Right ventricle myocardium inferior (tissue), 1 donor: ENCODE measurements at regions of chr5 and their contacts with region 1.

Region 1: GRCh38 chr5:151051066-151051930 is 29.5 kb downstream of the TNIP1 start:
- DNase-seq: peak; percentile 85
- ATAC-seq: peak; percentile 83

Region 2: DNA sequence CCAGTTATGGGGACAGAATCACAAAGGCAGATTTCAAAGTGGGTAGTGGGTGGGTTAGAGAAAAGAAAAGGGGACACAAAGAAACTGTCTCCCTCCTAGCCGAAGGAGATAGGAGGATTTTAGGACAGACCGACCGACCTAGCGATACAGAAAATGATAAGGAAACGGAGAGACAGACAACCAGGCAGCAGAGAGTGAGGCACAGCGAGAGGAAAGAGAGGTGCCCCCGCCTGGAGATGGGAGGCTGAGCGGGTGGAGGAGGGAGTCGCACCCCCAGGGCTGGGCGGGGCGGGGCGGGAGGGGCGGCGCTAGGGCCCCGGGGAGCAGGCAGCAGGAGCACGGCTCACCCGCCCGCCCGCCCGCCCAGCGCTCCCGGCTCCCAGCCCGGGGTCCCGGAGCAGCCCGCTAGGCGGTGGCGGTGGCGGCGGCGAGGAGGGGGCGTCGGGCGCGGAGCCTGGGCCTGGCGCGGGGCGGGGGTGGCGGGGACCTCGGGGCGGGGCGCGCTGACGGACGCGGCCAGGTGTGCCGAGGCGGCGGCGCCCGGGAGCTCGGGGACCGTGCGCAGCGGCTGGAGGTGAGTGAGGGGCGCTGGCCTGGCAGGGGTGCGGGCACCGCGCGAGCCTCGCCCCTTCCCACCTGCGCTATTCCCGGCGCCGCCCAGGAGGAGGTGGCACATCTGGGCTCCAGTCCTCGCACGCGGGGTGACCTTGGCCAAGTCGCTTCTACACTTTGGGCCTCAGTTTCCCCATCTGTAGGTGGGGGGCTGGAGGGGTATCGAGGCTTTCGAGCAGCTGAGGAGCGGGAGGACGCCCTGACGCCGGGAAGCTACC is 426.7 kb before region 1 on chr5:
- intact Hi-C with region 1: no loop called
- DNase-seq: peak; percentile 65
- ATAC-seq: peak; percentile 34

Region 3: DNA sequence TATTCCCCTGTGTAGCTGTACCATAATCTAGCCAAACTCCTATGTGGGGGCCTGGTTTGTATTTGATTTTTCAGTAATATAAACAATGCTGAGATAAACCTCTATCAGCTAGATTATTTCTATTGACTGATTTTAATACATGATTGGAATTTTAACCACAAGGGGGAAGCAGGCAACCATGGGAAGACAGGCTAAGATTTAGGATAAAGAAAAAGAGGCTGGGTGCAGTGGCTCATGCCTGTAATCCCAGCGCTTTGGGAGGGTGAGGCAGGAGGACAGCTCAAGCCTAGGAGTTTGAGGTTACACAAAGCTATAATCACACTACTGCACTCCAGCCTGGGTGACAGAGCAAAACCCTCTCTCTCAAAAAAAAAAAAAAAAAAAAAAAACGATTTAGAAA is 49.0 kb before region 1 on chr5:
- intact Hi-C with region 1: loop called (anchors 1 kb)
- DNase-seq: no peak
- ATAC-seq: no peak

Region 4: GRCh38 chr5:151107738-151108508 is 56.6 kb after region 1 on chr5:
- intact Hi-C with region 1: no loop called
- DNase-seq: no peak
- ATAC-seq: peak; percentile 58